ENCODE measurements at regions of chr22 and their contacts with region 1.

Region 1: GRCh38 chr22:36546092-36546804 is 17.3 kb upstream of the EIF3D start:
- DNase-seq: no peak
- H3K4me3 ChIP-seq: no peak overlapping the region
- H3K27ac ChIP-seq: no peak overlapping the region
- H3K4me1 ChIP-seq: peaks cover 29% of the 10 kb centered on the region
- H3K27me3 ChIP-seq: peaks cover 4% of the 10 kb centered on the region
- CTCF ChIP-seq: peak; percentile 41 to 64

Region 2: DNA sequence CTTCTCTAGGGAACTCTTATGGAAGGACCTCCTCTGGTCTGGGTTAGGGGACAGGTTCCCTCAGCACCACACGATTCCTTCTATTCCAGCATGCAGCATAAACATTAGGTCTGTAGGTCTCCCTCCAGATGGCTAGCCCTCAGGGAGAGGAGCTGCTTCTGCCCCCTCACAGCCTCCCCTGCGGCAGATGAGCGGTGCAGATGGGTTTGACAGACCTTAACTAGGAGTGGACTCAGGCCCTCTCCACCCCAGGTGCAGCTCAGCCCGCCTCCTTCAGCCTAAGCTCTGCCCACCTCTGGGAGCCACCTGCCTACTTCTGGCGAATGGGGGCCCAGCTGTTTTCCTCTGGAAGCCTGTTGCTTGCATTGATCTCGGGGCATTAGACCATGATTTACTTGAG is 38.4 kb after region 1 on chr22:
- CTCF ChIA-PET with region 1: no interaction called
- dilution Hi-C with region 1: loop called (anchors 5 kb)
- in situ Hi-C with region 1: no loop called
- intact Hi-C with region 1: no loop called
- DNase-seq: no peak
- H3K4me3 ChIP-seq: no peak overlapping the region
- H3K27ac ChIP-seq: no peak overlapping the region
- H3K4me1 ChIP-seq: peaks cover 11% of the 10 kb centered on the region
- H3K27me3 ChIP-seq: peaks cover 6% of the 10 kb centered on the region
- CTCF ChIP-seq: no peak

Region 3: GRCh38 chr22:36757668-36758211 is 211.5 kb after region 1 on chr22:
- CTCF ChIA-PET with region 1: no interaction called
- dilution Hi-C with region 1: no loop called
- in situ Hi-C with region 1: no loop called
- intact Hi-C with region 1: loop called (anchors 1 kb)
- DNase-seq: peak; percentile 50
- H3K4me3 ChIP-seq: no peak overlapping the region
- H3K27ac ChIP-seq: no peak overlapping the region
- H3K4me1 ChIP-seq: peaks cover 2% of the 10 kb centered on the region
- H3K27me3 ChIP-seq: no peaks in the 10 kb centered on the region
- CTCF ChIP-seq: peak; percentile 87 to 91

Region 4: DNA sequence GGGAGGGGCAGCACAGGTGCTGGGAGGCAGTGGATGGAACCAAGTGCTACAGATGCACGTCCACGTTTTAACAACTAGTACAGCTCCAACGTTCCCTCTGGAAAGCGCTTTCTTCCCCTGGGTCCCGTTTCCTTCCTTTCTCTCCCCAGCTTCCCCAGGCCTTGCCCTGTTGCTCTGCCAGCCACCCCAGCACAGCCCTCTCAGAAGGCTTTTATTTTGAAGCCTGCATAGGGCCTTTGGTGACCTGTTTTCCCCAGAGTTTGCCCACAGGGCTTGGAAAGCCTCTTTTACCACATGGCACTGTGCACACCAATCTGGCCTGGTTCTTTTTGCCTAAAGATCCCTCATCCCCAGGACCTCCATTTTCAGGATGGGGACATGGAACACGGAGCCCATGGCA is 300.7 kb after region 1 on chr22:
- CTCF ChIA-PET with region 1: no interaction called
- dilution Hi-C with region 1: loop called (anchors 5 kb)
- in situ Hi-C with region 1: loop called in 1 of 2 experiments (anchors 10 kb)
- intact Hi-C with region 1: no loop called
- DNase-seq: no peak
- H3K4me3 ChIP-seq: no peak overlapping the region
- H3K27ac ChIP-seq: no peak overlapping the region
- H3K4me1 ChIP-seq: no peaks in the 10 kb centered on the region
- H3K27me3 ChIP-seq: no peaks in the 10 kb centered on the region
- CTCF ChIP-seq: no peak

Region 5: DNA sequence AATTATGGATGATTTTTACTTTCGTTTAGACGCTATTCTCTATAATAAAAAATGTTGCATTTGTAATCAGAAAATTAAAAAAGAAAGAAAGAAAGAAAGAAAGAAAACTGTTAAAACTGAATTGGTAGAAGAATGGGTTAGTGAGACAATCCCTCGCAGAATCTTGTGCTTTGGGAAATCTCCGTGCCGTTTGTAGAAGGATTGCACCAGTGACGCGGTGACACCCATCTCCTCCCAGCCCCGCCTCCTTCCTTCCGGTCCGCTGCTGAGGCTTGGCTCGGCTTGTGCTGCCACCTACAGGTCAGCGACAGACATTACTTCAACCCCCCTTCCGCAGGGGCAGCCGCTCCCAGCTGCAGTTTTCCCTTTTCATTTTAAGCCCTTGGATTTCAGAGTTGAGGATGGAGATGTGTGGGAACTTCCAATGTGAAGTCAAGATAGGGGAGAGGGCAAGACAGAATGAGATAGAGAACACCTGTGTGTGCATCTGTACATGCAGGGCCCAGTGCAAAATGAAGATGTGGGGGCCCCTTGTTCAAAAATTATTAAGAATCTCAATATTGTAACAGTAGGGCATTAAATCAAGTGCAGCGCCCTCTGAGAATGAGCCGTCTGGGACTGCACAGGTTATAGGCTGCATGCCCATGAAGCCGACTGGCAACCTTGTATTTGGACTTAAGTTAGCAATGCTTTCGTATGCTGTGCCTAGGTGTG is 431.9 kb after region 1 on chr22:
- CTCF ChIA-PET with region 1: no interaction called
- dilution Hi-C with region 1: no loop called
- in situ Hi-C with region 1: no loop called
- intact Hi-C with region 1: loop called (anchors 1 kb)
- DNase-seq: peak; percentile 61
- H3K4me3 ChIP-seq: peak overlapping the region in 1 of 3 experiments; percentile 3
- H3K27ac ChIP-seq: no peak overlapping the region
- H3K4me1 ChIP-seq: no peaks in the 10 kb centered on the region
- H3K27me3 ChIP-seq: no peaks in the 10 kb centered on the region
- CTCF ChIP-seq: peak; percentile 73 to 83